ENCODE measurements at regions of chr2 and their contacts with region 1.

Region 1: GRCh38 chr2:137834760-137835379 is 129.4 kb upstream of the HNMT start:
- DNase-seq: no peak
- ATAC-seq: no peak
- H3K4me3 ChIP-seq: no peak overlapping the region
- H3K27ac ChIP-seq: no peak overlapping the region
- H3K4me1 ChIP-seq: no peaks in the 10 kb centered on the region
- H3K27me3 ChIP-seq: peaks cover 4% of the 10 kb centered on the region
- CTCF ChIP-seq: no peak

Region 2: DNA sequence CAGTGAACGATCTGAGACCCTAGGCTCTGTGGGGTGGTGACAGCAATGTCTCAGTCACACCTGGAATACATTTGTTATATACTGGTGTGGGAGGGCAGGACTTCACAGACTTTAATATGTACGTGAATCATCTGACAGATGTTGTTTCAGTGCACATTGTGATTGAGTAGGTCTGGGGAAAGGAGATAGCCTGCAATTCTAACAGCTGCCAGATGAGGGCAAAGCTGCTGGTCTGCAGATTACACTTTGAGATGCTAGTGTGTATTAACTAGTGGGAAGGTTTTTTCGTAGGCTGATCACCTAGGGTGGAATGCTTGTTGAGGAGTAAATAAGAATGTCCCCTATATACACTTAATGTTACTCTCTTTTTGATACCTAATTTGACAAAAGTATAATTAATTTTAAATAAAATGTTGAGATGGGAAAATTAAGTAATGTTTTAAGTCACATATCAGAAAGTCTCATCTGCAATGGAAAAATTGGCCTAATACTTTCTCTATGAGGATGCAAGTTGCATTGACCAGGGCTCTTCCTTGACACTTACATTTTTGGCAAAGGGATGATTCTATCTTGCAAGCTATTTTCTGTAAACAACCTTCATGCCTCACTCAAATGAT is 367.5 kb before region 1 on chr2:
- intact Hi-C with region 1: loop called (anchors 5 kb)
- DNase-seq: no peak
- ATAC-seq: peak; percentile 62 to 73
- H3K4me3 ChIP-seq: no peak overlapping the region
- H3K27ac ChIP-seq: no peak overlapping the region
- H3K4me1 ChIP-seq: no peaks in the 10 kb centered on the region
- H3K27me3 ChIP-seq: no peaks in the 10 kb centered on the region
- CTCF ChIP-seq: peak; percentile 56

Measured in lower lobe of right lung (tissue), 2 donors.